GM10248 (cell line): ENCODE measurements at regions of chr1 and their contacts with region 1.

Region 1: DNA sequence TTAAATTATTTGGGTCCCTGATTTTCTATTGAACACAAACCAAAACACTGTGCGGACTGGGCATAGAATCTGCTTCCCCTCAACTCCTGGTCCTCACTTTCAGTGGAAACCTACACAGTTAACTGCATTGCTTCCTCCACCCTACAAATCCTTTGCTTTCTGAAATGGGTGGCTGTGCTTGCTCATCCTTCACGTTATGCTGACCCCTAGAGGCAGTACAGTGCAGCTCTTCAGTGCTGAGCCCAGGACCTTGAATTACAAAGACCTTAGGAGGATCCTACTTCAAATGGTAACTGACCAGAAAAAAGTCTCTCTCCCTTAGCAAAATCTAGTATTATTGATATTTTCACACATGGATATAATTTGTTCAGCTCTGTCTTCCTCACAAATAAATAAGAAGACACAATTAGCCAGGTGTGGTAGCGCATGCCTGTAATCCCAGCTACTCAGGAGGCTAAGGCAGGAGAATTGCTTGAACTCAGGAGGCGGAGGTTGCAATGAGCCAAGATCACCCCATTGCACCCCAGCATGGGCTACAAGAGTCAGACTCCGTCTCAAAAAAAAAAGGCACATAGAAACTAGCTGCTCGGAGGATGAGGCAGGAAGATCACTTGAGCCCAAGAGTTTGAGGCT is 63.4 kb upstream of the L1TD1 start:
- DNase-seq: peak; percentile 75
- CTCF ChIP-seq: peak; percentile 97

Region 2: DNA sequence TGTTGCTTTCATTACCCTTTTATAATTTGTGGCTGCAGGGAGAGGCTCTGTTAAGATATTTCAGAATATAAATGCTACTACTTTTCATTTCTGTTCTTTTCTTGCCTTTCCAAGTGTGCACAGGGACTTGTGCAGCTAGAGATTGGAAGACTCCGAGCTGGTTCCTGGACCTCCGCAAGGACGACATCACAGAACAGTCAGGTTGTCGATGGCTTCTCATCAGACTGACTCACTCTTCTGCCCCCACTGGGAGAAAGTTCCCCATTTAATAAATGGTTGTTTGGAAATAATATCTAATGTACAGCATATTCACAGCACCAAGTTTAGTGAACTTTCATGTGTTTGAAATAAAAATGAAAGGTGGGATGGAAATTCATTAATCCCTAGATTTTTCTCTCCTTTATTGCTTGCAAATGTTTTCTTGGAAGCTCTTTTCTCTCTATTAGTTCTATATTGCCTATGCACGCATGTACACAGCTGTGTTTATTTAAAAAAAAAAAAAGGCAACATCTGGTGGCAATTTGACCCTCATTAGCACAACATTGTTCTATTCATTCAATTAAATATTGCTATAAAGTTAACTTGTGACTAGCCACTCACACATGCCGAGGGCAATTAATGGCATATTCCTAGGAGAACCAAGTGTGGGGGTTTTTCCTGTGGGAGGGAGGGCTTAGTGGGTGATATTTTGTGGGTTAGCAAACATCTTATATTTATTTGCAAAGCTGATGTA is 14.0 kb before region 1 on chr1:
- CTCF ChIA-PET with region 1: interaction called, 25 read pairs
- POLR2A ChIA-PET with region 1: no interaction called
- DNase-seq: no peak
- CTCF ChIP-seq: no peak

Region 3: GRCh38 chr1:62218604-62219003 is 87.4 kb after region 1 on chr1:
- CTCF ChIA-PET with region 1: no interaction called
- POLR2A ChIA-PET with region 1: no interaction called
- DNase-seq: no peak
- CTCF ChIP-seq: no peak

Region 4: DNA sequence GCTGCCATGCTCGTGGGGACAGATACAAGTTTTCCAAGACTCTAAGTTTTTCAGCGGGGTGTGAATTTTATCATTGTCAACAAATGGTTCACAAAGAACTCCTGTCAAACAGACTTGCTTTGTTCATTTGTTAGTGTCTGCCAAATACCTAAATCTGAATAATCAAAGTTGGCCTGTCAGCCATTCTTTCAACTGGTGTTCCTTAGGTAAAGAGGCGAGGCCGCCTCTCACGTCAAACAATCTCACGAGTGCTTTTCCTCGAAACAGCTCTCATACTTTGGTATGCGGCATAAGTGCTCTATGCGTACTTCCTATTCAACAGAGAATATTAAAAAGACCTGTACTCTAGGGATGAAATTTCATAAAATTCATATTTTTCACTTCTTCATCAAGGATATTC is 239.4 kb after region 1 on chr1:
- CTCF ChIA-PET with region 1: no interaction called
- POLR2A ChIA-PET with region 1: no interaction called
- DNase-seq: no peak
- CTCF ChIP-seq: no peak